ENCODE measurements at regions of chr12 and their contacts with region 1.

Region 1: GRCh38 chr12:105413911-105414487 is 83.5 kb downstream of the C12orf75 start:
- DNase-seq: no peak

Region 2: GRCh38 chr12:105301696-105302095 is 112.3 kb before region 1 on chr12:
- intact Hi-C with region 1: no loop called
- DNase-seq: no peak

Region 3: DNA sequence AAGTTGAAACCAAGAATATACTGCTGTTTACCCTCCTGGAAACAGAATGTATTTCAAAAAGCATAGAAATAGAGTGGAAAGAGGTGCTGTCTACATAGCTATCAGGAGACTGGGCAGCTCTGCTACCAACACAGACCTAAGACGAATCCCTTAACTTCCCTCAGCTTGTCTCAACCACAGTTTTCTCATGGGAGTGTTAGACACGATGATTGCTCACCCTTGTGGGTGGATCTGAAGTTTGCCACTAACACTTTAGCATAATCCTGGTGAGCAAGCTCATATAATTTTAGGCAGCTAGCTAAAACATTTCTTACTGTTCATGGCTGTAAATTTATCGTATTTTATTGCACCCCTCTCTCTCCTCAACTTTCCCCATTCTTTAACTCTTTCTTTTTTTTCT is 45.0 kb before region 1 on chr12:
- intact Hi-C with region 1: loop called in 1 of 2 experiments (anchors 2 kb)
- DNase-seq: no peak

Region 4: GRCh38 chr12:105462831-105463230 is 48.8 kb after region 1 on chr12:
- intact Hi-C with region 1: no loop called
- DNase-seq: no peak

Measured in posterior vena cava (tissue), 2 donors.